OCI-LY7 (cell line): ENCODE measurements at regions of chr7 and their contacts with region 1.

Region 1: GRCh38 chr7:129017933-129018538 is 36.9 kb downstream of the TNPO3 start:
- DNase-seq: peak; percentile 82
- H3K4me3 ChIP-seq: peak overlapping the region; percentile 22
- H3K27ac ChIP-seq: peak overlapping the region; percentile 79
- H3K4me1 ChIP-seq: peaks cover 45% of the 10 kb centered on the region
- CTCF ChIP-seq: no peak

Region 2: DNA sequence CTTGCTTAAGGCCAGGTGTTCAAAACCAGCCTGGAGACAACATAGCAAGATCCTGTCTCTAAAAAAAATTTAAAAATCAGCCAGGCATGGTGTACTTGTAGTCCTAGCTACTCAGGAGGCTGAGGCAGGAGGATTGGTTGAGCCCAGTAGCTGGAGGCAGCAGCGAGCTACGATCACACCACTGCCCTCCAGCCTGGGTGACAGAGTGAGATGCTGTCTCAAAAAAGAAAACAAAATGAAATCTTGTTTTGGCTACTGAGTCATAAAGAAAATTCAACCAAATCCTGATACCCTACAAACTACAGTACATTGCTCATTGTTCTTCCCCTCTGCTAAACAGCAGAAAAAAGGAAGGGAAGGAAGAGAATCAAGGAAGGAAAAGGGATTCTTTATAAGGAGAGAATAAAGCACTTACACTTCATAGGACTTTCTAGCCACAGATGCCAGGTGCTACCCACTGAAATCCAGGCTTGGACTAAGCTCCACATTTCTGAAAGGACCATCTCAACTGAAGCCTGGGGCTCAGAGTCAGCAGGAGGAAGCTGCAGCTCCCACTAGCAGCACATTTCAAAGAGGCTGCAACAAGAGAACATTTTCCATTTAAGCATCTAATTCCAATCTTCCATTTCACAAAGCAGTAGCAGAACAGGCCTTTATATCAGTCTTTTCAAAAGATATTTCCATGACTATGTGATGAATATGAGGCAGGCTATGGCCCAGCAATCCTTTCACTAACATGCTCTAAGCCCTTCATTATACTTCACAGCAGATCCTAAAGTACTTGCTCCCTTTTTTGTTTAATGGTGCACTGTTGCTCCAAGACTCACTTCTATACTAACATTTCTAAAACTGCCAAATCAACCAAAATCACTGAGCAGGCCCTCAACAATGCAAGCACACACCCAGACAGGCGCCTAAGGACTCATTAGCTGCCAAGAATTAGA is 23.4 kb after region 1 on chr7:
- CTCF ChIA-PET with region 1: no interaction called
- POLR2A ChIA-PET with region 1: interaction called, 11 read pairs
- intact Hi-C with region 1: no loop called
- DNase-seq: peak; percentile 56
- H3K4me3 ChIP-seq: peak overlapping the region; percentile 2
- H3K27ac ChIP-seq: peak overlapping the region; percentile 54
- H3K4me1 ChIP-seq: peaks cover 56% of the 10 kb centered on the region
- CTCF ChIP-seq: peak; percentile 36; the same call in 1 of the 2 replicates